ENCODE measurements at regions of chr5 and their contacts with region 1.

Region 1: GRCh38 chr5:113678924-113679575 is 165.6 kb downstream of the YTHDC2 start:
- DNase-seq: peak; percentile 45
- ATAC-seq: peak; percentile 49
- H3K4me3 Mint-ChIP-seq: no peak overlapping the region
- H3K27ac Mint-ChIP-seq: no peak overlapping the region
- H3K4me1 Mint-ChIP-seq: no peaks in the 10 kb centered on the region
- H3K27me3 Mint-ChIP-seq: peaks cover 6% of the 10 kb centered on the region

Region 2: GRCh38 chr5:112823623-112824596 is 855.1 kb before region 1 on chr5:
- CTCF ChIA-PET with region 1: no interaction called
- POLR2A ChIA-PET with region 1: no interaction called
- intact Hi-C with region 1: no loop called
- DNase-seq: no peak
- ATAC-seq: no peak
- H3K4me3 Mint-ChIP-seq: no peak overlapping the region
- H3K27ac Mint-ChIP-seq: no peak overlapping the region
- H3K4me1 Mint-ChIP-seq: no peaks in the 10 kb centered on the region
- H3K27me3 Mint-ChIP-seq: no peaks in the 10 kb centered on the region

Region 3: GRCh38 chr5:113776832-113777525 is 97.9 kb after region 1 on chr5:
- CTCF ChIA-PET with region 1: no interaction called
- POLR2A ChIA-PET with region 1: no interaction called
- intact Hi-C with region 1: no loop called
- DNase-seq: no peak
- ATAC-seq: no peak
- H3K4me3 Mint-ChIP-seq: no peak overlapping the region
- H3K27ac Mint-ChIP-seq: no peak overlapping the region
- H3K4me1 Mint-ChIP-seq: no peaks in the 10 kb centered on the region
- H3K27me3 Mint-ChIP-seq: no peaks in the 10 kb centered on the region

Region 4: GRCh38 chr5:114449860-114450421 is 770.9 kb after region 1 on chr5:
- CTCF ChIA-PET with region 1: interaction called, 11 read pairs
- POLR2A ChIA-PET with region 1: no interaction called
- intact Hi-C with region 1: loop called (anchors 1 to 2 kb)
- DNase-seq: peak; percentile 76
- ATAC-seq: peak; percentile 92
- H3K4me3 Mint-ChIP-seq: no peak overlapping the region
- H3K27ac Mint-ChIP-seq: no peak overlapping the region
- H3K4me1 Mint-ChIP-seq: peaks cover 2% of the 10 kb centered on the region
- H3K27me3 Mint-ChIP-seq: peaks cover 7% of the 10 kb centered on the region

Region 5: DNA sequence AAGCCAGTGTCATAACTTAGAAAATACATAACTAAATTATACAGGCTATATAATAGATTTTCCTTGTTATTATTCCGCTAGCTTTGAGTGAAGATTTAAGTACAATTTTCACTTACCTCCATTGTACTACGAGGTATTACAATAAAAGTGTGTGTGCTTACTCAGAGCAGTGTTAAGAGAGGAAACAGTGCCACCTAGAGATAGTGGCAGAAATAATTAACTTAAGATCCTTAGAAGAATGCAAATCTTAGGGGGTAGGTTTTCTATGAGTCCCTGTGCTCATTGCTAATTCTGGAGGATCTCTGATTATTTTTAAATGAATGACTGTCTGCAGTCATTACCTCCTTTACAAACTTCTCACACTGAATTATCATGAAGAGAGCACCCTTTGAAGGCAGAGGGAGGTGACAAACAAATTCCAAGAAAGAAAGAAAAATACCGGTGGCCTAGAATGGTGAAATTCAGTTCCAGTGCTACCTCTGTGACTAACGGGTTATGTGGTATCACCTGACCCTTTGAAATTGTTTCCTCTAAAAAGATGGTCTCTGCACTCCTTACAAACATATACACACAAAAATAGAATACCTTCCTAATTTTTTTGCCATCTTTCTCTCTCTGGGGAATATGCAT is 1110.8 kb after region 1 on chr5:
- CTCF ChIA-PET with region 1: no interaction called
- POLR2A ChIA-PET with region 1: no interaction called
- intact Hi-C with region 1: loop called in 1 of 2 experiments (anchors 5 kb)
- DNase-seq: no peak
- ATAC-seq: peak; percentile 23
- H3K4me3 Mint-ChIP-seq: no peak overlapping the region
- H3K27ac Mint-ChIP-seq: no peak overlapping the region
- H3K4me1 Mint-ChIP-seq: peaks cover 3% of the 10 kb centered on the region
- H3K27me3 Mint-ChIP-seq: peaks cover 2% of the 10 kb centered on the region

Region 6: DNA sequence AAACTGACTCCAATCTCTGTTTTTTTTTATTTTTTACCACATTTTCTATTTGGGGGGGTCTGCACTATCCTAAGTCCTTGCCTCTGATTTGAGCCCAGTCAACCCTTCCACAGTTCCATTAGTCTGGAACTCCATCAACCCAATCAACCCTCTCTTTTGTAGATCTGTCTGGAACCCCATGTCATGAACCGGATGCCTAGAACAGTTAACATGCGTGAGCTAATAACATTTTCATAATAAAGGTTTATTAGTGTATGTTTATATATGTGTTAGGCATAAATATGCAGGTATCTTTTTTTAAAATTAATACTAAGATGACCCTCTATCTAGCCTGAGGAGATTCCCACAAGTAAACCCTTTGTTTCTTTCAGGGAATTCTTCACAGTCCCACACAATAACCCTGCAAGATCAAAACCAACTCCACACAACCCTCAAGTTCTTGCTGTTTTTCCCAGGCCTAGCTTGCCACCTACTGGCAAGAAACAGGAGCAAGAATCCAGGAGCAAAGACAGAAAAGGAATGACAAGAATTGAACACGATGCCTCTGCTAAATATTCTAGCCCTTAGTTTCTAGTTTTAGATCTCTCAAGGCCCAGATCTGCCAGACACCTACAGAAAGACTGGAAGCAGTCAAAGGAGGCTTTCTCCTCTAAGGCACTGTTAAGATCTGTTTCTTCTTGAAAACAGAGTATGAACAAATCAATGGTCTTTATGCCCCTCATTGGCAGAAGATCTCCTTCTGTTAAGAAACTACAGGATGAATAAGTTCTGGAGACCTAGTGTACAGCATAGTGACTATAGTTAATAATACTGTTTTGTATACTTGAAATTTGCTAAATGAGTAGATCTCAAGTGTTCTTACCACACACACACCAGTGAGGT is 1390.3 kb after region 1 on chr5:
- CTCF ChIA-PET with region 1: no interaction called
- POLR2A ChIA-PET with region 1: no interaction called
- intact Hi-C with region 1: loop called in 1 of 2 experiments (anchors 1 kb)
- DNase-seq: peak; percentile 35
- ATAC-seq: peak; percentile 20
- H3K4me3 Mint-ChIP-seq: no peak overlapping the region
- H3K27ac Mint-ChIP-seq: peak overlapping the region; percentile 55
- H3K4me1 Mint-ChIP-seq: peaks cover 18% of the 10 kb centered on the region
- H3K27me3 Mint-ChIP-seq: peaks cover 28% of the 10 kb centered on the region

Region 7: GRCh38 chr5:115246361-115246991 is 1567.4 kb after region 1 on chr5:
- CTCF ChIA-PET with region 1: no interaction called
- POLR2A ChIA-PET with region 1: no interaction called
- intact Hi-C with region 1: loop called in 1 of 2 experiments (anchors 10 kb)
- DNase-seq: no peak
- ATAC-seq: no peak
- H3K4me3 Mint-ChIP-seq: no peak overlapping the region
- H3K27ac Mint-ChIP-seq: no peak overlapping the region
- H3K4me1 Mint-ChIP-seq: peaks cover 21% of the 10 kb centered on the region
- H3K27me3 Mint-ChIP-seq: no peaks in the 10 kb centered on the region

Measured in activated CD4-positive, alpha-beta T cell treated with anti-CD3 and anti-CD28 coated beads for 36 hours (primary cell).